Ascending aorta (tissue), 2 donors: ENCODE measurements at regions of chr4 and their contacts with region 1.

Region 1: DNA sequence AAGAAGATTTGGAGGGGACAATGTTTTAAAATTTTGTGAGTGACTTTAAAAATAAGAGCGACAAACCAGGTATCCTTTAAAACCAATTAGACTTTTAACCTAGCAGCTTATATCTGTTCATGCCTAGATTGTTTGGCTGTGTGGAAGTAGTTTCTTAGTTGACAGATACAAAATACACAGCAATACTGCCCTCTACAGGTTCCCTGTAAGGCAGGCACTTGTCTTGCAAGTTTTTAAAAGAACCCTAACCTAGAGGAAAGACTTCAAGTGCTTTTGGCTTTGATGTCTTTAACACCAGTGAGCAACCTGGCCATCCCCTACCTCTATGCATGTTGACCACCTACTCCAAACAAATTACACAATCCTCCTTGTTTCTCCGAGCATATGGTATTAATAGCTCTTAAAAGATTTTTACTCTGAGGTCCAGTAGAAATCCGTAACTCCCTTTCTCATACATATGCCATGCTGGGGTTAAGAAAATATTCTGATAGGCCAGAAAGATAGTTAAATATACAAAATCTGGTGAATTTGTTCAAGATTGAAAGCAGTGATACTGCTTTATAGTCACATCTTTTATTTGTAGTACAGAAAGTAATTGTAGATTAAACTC is 273.0 kb downstream of the ARHGAP24 start:
- DNase-seq: peak in 1 of 2 donors; percentile 68
- H3K4me3 ChIP-seq: no peak overlapping the region
- H3K27ac ChIP-seq: no peak overlapping the region
- H3K4me1 ChIP-seq: peaks cover 0 to 3% of the 10 kb centered on the region in 2 donors
- H3K27me3 ChIP-seq: no peaks in the 10 kb centered on the region
- CTCF ChIP-seq: peak; percentile 76 to 87 (median 80)

Region 2: GRCh38 chr4:85084380-85085094 is 663.5 kb before region 1 on chr4:
- intact Hi-C with region 1: loop called (anchors 5 kb)
- DNase-seq: no peak
- H3K4me3 ChIP-seq: no peak overlapping the region
- H3K27ac ChIP-seq: no peak overlapping the region
- H3K4me1 ChIP-seq: no peaks in the 10 kb centered on the region
- H3K27me3 ChIP-seq: no peaks in the 10 kb centered on the region
- CTCF ChIP-seq: peak; percentile 48 to 61 (median 50)

Region 3: GRCh38 chr4:85147439-85148076 is 600.4 kb before region 1 on chr4:
- intact Hi-C with region 1: loop called (anchors 2 kb)
- DNase-seq: no peak
- H3K4me3 ChIP-seq: no peak overlapping the region
- H3K27ac ChIP-seq: no peak overlapping the region
- H3K4me1 ChIP-seq: no peaks in the 10 kb centered on the region
- H3K27me3 ChIP-seq: no peaks in the 10 kb centered on the region
- CTCF ChIP-seq: peak; percentile 21 to 55 (median 27)

Region 4: DNA sequence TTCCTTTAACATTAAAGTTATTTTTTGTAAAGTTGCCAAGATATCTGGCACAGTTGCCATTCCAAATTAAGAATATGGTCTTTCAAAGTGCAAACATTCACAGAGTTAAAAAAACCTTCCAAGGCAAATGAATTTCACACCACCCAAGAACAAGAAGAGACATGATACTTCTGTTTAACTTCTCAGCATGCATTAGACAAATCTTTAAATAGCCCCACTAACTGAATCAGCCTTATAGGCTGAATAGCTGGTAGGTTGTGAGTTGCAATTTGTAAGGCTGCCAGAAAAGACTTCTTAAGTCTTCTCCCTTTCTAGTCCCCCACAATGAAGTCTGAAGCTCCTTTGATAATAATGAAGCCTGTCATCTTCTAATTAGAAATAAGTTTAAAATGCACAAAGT is 516.3 kb after region 1 on chr4:
- intact Hi-C with region 1: no loop called
- DNase-seq: no peak
- H3K4me3 ChIP-seq: no peak overlapping the region
- H3K27ac ChIP-seq: no peak overlapping the region
- H3K4me1 ChIP-seq: no peaks in the 10 kb centered on the region
- H3K27me3 ChIP-seq: no peaks in the 10 kb centered on the region
- CTCF ChIP-seq: no peak